Breast epithelium (tissue), 4 donors: ENCODE measurements at regions of chr13 and their contacts with region 1.

Region 1: GRCh38 chr13:92947770-92948434 is 278.7 kb upstream of the GPC6 start:
- DNase-seq: no peak
- H3K4me3 ChIP-seq: no peak overlapping the region
- H3K27ac ChIP-seq: no peak overlapping the region
- H3K4me1 ChIP-seq: no peaks in the 10 kb centered on the region
- H3K27me3 ChIP-seq: no peaks in the 10 kb centered on the region
- CTCF ChIP-seq: no peak
- POLR2A ChIP-seq: no peak

Region 2: GRCh38 chr13:91978571-91978970 is 969.3 kb before region 1 on chr13:
- intact Hi-C with region 1: no loop called
- DNase-seq: no peak
- H3K4me3 ChIP-seq: no peak overlapping the region
- H3K27ac ChIP-seq: no peak overlapping the region
- H3K4me1 ChIP-seq: no peaks in the 10 kb centered on the region
- H3K27me3 ChIP-seq: no peaks in the 10 kb centered on the region
- CTCF ChIP-seq: no peak
- POLR2A ChIP-seq: no peak

Region 3: DNA sequence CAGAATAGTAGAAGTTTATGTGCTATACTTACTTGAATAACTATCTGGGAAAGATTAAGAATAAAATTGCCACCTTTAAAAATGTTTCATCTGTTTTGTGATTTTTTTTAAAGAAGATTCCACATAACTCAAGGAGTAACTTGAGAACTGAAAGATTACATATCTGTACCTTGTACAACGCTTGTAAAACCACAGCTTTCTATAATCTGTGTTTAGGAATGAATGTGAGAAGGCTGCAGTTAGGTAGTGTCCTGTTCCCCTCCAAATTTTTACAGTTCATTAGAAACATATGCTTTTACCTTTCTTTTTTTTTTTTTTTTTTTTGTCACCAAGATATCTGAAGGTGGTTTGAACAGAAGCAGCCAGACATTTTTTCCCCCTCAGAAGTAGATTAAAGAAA is 34.1 kb before region 1 on chr13:
- intact Hi-C with region 1: loop called (anchors 2 kb)
- DNase-seq: no peak
- H3K4me3 ChIP-seq: no peak overlapping the region
- H3K27ac ChIP-seq: no peak overlapping the region
- H3K4me1 ChIP-seq: no peaks in the 10 kb centered on the region
- H3K27me3 ChIP-seq: no peaks in the 10 kb centered on the region
- CTCF ChIP-seq: no peak
- POLR2A ChIP-seq: no peak